ENCODE measurements at regions of chr14 and their contacts with region 1.

Region 1: DNA sequence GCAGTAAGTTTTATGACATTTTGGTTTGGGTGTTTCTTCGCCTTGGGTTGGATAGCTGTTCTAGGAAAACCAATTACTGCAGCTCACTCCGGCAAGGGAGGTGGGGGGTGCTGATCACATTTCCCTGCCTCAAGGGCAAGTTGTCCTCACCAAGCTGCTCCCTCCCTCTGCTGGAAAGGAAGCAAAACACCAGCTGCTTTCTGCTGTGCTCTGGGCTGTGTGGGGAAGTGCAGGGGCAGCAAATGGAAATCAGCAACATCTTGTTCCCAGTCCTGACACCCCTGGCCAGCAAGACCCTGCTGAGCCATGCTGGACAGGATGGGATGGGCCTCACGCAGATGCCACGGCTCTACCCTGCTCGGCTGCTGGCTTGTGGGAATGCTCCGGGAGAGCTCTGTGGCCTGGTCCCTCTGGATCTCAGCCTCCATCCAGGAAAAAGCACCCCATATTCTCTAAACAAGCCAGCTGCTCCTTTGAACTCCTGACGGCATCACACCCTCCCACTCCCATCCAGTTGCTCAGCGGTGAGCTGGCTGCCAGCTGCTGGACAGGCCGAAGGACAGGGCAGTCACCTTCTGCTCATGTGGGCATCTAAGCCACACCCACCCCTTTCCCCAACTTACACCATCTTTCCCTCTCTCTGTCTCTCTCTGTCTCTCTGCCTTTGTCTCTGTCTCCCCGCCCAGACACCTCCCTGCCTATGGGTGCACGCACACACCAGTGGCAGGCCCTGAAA is 52.4 kb upstream of the EIF5 start:
- DNase-seq: no peak
- H3K4me3 ChIP-seq: no peak overlapping the region
- H3K27me3 ChIP-seq: peaks cover 3% of the 10 kb centered on the region; the same call in 1 of the 2 replicates
- CTCF ChIP-seq: peak; percentile 79

Region 2: DNA sequence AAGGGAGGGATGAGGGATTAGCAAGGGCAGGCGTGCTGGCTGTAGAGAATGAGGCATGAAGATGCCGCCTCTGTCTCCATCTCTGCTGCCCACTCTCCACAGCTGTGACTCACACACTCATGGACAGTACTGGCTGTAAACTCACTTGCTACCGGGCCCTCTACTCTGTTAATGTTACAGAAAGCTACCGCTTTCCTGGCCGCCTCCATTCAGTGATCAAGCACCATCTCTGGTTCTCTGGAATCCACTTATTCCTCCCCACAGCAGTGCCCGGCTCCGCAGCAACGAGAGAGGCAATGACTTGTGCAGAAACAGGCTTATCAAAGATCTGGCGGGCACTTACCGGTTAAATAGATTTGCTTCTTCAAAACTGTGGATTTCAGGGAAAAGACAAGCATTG is 324.4 kb before region 1 on chr14:
- CTCF ChIA-PET with region 1: no interaction called
- POLR2A ChIA-PET with region 1: no interaction called
- DNase-seq: no peak
- H3K4me3 ChIP-seq: no peak overlapping the region
- H3K27me3 ChIP-seq: no peaks in the 10 kb centered on the region
- CTCF ChIP-seq: no peak

Region 3: DNA sequence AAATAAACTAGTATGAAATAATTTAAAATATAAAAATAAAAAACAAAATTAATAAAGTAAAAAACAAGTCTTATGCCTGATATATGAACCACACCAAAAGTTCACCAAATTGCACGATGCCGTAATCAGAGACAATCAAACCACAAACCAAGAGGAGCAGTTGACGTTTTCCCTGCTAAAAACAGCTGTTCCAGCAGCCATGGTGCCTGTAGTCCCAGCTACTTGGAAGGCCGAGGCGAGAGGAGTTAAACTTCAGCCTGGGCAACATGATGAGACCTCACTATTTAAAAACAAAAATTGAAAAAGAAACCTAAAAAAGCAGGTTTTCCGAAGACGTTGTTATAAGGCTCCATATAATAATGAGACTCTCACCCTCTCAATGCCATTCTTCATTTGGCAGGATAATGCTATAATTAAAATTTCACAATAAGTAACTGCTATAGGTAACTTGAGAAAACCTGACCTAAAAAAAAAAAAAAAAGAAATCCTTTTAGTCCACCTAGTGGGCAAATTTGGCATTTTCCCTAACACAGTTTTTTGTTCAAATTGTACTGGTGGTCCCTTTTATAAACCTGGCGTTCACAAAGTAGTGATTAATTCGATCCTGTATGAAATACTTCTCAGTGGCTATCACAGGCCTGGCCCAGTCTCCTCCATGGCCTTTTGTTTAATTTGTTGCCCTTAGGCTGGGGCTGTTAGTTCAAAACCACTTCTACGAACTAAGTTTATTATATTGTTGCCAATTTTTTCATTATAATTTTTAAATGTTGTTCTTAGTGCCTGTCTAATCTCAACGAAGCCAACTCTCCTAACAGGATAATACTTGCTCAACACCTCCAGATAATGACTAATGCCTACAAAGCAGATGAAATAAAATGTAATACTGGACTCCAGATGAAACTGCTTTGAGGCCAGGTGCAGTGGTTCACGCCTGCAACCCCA is 96.3 kb before region 1 on chr14:
- CTCF ChIA-PET with region 1: interaction called, 10 read pairs
- POLR2A ChIA-PET with region 1: no interaction called
- DNase-seq: no peak
- H3K4me3 ChIP-seq: no peak overlapping the region
- H3K27me3 ChIP-seq: peaks cover 6% of the 10 kb centered on the region; the same call in 1 of the 2 replicates
- CTCF ChIP-seq: peak; percentile 61

Region 4: GRCh38 chr14:103207388-103208072 is 74.1 kb before region 1 on chr14:
- CTCF ChIA-PET with region 1: interaction called, 12 read pairs
- POLR2A ChIA-PET with region 1: no interaction called
- DNase-seq: no peak
- H3K4me3 ChIP-seq: peak overlapping the region; percentile 57
- H3K27me3 ChIP-seq: no peaks in the 10 kb centered on the region
- CTCF ChIP-seq: no peak

Region 5: GRCh38 chr14:103372603-103373304 is 91.1 kb after region 1 on chr14:
- CTCF ChIA-PET with region 1: no interaction called
- POLR2A ChIA-PET with region 1: no interaction called
- DNase-seq: peak; percentile 71
- H3K4me3 ChIP-seq: no peak overlapping the region
- H3K27me3 ChIP-seq: no peaks in the 10 kb centered on the region
- CTCF ChIP-seq: no peak